A549 (cell line): ENCODE measurements at regions of chr5 and their contacts with region 1.

Region 1: GRCh38 chr5:82364497-82364896 is 86.3 kb upstream of the RPS23 start:
- DNase-seq: peak in 1 of 2 experiments; percentile 45
- ATAC-seq: peak; percentile 78 to 83; a peak in 5 of 6 replicates
- H3K4me3 ChIP-seq: no peak overlapping the region
- H3K27ac ChIP-seq: peak overlapping the region in 1 of 2 experiments; percentile 8; a peak in 1 of 6 replicates
- H3K4me1 ChIP-seq: peaks cover 14% of the 10 kb centered on the region; the same call in 2 of the 3 replicates
- CTCF ChIP-seq: peak; percentile 47
- EP300 ChIP-seq: no peak
- POLR2A ChIP-seq: no peak
- RAD21 ChIP-seq: peak; percentile 61 to 78

Region 2: GRCh38 chr5:82314964-82315758 is 49.3 kb before region 1 on chr5:
- CTCF ChIA-PET with region 1: no interaction called
- POLR2A ChIA-PET with region 1: no interaction called
- DNase-seq: no peak
- ATAC-seq: no peak
- H3K4me3 ChIP-seq: no peak overlapping the region
- H3K27ac ChIP-seq: no peak overlapping the region
- H3K4me1 ChIP-seq: no peaks in the 10 kb centered on the region
- CTCF ChIP-seq: no peak
- EP300 ChIP-seq: no peak
- POLR2A ChIP-seq: no peak
- RAD21 ChIP-seq: no peak

Region 3: DNA sequence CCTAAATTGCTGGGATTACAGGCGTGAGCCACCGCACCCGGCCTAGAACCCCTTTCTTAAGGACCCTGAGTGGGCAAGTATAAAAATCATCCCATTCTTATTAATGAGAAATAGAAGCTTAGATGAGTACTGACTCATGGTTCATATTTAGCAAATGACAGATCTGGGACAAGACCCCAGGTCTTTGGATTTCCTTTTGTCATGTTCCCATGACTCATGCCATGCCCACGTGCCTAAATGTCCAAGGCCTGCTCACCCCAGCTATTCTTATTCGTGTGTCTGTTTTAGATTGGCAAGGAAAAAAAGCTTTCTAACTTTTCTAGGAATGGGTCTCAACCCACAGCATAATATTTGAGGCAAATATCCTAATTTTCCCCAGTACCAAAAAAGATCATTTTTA is 28.7 kb before region 1 on chr5:
- CTCF ChIA-PET with region 1: no interaction called
- POLR2A ChIA-PET with region 1: no interaction called
- DNase-seq: no peak
- ATAC-seq: no peak
- H3K4me3 ChIP-seq: no peak overlapping the region
- H3K27ac ChIP-seq: no peak overlapping the region
- H3K4me1 ChIP-seq: no peaks in the 10 kb centered on the region
- CTCF ChIP-seq: no peak
- EP300 ChIP-seq: no peak
- POLR2A ChIP-seq: no peak
- RAD21 ChIP-seq: no peak

Region 4: GRCh38 chr5:82351754-82352145 is 12.7 kb before region 1 on chr5:
- CTCF ChIA-PET with region 1: interaction called, 19 read pairs
- POLR2A ChIA-PET with region 1: interaction called, 4 read pairs
- DNase-seq: peak; percentile 55 to 60
- ATAC-seq: peak; percentile 86 to 94
- H3K4me3 ChIP-seq: no peak overlapping the region
- H3K27ac ChIP-seq: peak overlapping the region in 1 of 2 experiments; percentile 36; a peak in 3 of 6 replicates
- H3K4me1 ChIP-seq: peaks cover 7% of the 10 kb centered on the region; the same call in 1 of the 3 replicates
- CTCF ChIP-seq: peak; percentile 89
- EP300 ChIP-seq: no peak
- POLR2A ChIP-seq: no peak
- RAD21 ChIP-seq: peak; percentile 89 to 91